Dorsolateral prefrontal cortex (tissue), 120 donors: ENCODE measurements at regions of chr2 and their contacts with region 1.

Region 1: GRCh38 chr2:196431957-196432356 is 207.6 kb upstream of the CCDC150 start:
- DNase-seq: no peak
- H3K4me3 ChIP-seq: no peak overlapping the region
- H3K27ac ChIP-seq: peak overlapping the region in 2 of 59 donors; percentile 9 to 51
- H3K27me3 ChIP-seq: no peaks in the 10 kb centered on the region
- CTCF ChIP-seq: peak in 51 of 56 donors; percentile 17 to 60 (median 44)

Region 2: DNA sequence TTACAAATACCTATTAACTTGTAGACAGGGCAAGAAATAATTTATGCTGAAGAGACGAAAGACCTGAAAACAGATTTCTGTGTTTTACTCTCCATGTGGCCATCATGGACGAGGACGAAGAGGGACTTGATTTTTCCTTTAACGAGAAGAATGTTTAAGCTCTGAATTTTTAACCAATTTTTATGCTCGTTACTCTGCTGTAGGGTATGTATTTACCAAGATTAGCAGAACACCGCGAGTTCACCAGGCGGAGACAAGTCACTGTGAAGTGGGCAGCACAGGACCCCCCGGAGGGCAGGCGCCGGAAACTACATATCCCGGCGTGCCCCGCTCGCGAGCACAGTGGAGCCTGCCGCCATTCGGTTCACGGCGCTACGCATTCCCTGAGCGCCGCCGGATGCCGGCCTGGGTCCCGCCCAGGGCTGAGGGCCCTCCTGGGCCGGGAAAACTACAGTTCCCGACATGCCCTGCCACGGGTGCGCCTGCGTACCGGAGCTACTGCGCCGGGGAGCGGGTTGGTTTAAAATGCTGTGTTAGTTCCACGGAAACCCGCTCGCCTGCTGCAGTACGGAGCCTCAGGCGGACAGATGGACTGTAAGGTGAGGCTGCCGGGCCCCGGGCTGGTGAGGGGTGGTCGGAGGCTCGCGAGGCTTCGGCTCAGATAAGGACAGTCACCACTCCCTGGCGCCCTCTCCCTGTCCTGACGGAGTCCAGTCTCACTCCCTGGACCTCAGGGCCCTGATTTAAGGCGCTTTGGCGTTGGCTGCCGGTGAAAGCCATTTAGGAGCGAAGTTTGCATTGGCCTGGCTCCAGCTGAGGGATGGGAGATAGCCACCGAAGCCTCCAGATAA is 207.4 kb after region 1 on chr2 and contains the start of gene CCDC150:
- intact Hi-C with region 1: loop called in 1 of 2 experiments (anchors 5 kb)
- DNase-seq: peak; percentile 87 to 97 (median 94)
- H3K4me3 ChIP-seq: peak within 1 kb of the TSS; percentile 34 to 89 (median 74)
- H3K27ac ChIP-seq: peak within 1 kb of the TSS in 36 of 59 donors; percentile 4 to 73 (median 46)
- H3K27me3 ChIP-seq: no peaks in the 10 kb centered on the region
- CTCF ChIP-seq: peak in 51 of 56 donors; percentile 24 to 71 (median 52)
- total RNA-seq, gene CCDC150: 0.67 to 10.5 (median 4.1) TPM